ENCODE measurements at regions of chr17 and their contacts with region 1.

Region 1: DNA sequence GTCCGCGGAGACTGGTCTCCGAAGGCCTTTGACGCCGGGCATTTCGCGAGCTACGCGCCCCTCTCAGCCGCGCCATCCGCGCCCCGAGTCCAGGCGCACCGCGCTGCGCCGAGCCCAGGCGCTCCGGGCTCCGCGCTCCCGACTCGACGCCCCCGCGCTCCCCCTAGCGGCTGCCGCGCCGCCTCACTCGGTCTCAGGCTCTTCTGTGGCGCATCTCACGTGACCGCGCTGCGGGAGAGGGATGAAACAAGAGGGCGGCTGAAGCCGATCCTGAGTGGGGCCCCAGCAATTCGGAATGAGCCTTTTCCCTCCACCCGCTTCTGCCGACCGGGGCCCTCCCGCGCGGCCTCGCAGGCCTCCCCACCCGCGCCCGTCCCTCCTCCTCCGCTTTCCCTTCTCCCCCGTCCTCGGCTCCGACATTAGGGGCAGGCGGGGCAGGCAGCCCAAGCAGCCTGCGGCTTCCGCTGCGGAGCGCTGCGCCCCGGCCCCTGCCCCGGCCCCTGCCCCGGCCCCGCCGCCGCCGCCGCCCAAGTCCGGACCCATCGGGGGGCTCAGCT is 42.5 kb upstream of the AMZ2 start:
- DNase-seq: peak; percentile 87 to 96 (median 94)
- H3K4me3 ChIP-seq: peak overlapping the region; percentile 48 to 91 (median 75)
- H3K27ac ChIP-seq: peak overlapping the region in 58 of 59 donors; percentile 55 to 96 (median 91)
- H3K27me3 ChIP-seq: peaks cover 0 to 8% (median 0%) of the 10 kb centered on the region in 45 donors
- CTCF ChIP-seq: peak; percentile 71 to 98 (median 90)

Region 2: DNA sequence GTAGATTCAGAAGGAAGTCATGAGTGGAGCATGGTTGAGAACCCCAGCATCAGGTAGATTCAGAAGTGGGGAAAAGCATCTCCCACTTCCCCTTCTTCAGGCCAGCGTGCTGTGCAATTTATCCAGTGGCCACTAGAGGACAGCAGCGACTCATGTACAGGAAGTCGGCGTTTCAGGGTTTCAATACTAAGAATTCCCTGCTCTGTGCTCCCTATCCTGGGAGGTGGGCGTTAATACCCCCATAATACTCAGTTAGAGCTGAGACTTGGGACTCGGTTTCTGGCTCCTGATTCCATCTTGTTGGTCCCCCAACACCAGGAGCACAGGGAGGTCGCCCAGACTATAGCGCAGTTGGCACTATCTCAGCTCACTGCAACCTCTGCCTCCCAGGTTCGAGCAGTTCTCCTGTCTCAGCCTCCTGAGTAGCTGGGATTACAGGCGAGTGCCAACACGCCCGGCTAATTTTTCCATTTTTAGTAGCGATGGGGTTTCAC is 32.8 kb before region 1 on chr17:
- intact Hi-C with region 1: loop called in 1 of 2 experiments (anchors 2 kb)
- DNase-seq: peak in 9 of 10 donors; percentile 53 to 77 (median 70)
- H3K4me3 ChIP-seq: no peak overlapping the region
- H3K27ac ChIP-seq: no peak overlapping the region
- H3K27me3 ChIP-seq: no peaks in the 10 kb centered on the region
- CTCF ChIP-seq: peak; percentile 79 to 99 (median 94)

Region 3: DNA sequence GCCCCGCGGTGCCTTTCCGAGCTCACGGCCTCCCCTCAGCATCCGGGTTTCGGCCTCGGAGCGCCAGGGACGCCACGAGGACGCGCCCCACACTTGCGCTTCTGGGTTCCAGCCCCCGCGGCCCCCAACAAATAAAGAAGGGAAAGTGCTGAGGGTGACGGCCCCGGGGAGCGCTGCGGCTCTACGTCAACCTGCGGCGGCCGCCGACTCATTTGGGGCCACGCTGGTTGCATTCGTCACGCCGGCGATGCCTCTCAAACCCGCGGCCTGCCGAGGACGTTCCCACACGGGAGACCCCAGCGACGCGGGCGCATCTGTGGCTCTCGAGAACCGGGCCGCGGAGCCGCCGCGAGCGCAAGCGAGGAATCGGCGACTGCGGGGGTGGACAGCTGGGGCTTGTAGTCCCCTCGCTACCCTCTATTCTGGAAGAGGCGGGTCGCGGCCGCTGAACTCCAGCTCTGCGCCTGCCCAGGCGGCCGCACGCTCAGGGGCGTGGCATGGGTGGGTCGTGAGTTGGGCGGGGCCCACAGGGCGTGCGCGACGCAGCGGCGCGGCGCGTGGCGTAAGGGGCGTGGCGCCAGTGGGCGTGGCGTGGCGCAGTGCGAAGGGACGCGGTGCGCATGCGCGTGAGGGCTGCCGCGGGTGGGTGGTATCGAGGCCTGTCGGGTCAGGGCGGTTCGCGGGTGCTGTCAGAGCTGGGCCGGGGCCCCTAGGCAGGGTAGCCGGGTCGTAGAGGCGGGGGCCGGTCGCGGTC is 42.3 kb after region 1 on chr17 and contains the start of gene AMZ2:
- intact Hi-C with region 1: loop called (anchors 2 to 5 kb)
- DNase-seq: peak; percentile 87 to 98 (median 94)
- H3K4me3 ChIP-seq: peak within 1 kb of the TSS; percentile 60 to 97 (median 88)
- H3K27ac ChIP-seq: peak within 1 kb of the TSS; percentile 85 to 100 (median 97)
- H3K27me3 ChIP-seq: no peaks in the 10 kb centered on the region
- CTCF ChIP-seq: peak in 33 of 56 donors; percentile 12 to 66 (median 29)
- total RNA-seq, gene AMZ2: 77.7 to 163 (median 118) TPM